ENCODE measurements at regions of chr17 and their contacts with region 1.

Region 1: DNA sequence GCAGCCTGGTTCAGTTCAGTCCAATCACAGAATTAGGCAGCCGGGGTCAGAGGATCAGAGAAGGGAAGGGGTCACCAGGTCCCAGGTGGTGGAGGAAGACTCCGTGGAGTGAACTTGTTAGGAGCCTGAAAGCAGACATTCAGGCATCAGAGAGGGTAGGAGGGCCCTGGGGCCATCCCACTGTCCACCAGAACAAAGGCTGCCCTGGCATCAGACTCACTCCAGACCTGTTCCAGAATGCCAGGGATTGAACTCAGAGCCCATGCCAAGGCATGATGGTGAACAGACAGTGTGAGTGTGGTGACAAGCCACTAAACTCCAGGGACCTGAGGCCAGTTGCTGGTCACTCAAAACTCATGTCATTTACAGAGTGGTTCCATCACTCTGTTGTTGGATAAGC is 37.6 kb downstream of the B4GALNT2 start:
- DNase-seq: no peak
- ATAC-seq: no peak

Region 2: DNA sequence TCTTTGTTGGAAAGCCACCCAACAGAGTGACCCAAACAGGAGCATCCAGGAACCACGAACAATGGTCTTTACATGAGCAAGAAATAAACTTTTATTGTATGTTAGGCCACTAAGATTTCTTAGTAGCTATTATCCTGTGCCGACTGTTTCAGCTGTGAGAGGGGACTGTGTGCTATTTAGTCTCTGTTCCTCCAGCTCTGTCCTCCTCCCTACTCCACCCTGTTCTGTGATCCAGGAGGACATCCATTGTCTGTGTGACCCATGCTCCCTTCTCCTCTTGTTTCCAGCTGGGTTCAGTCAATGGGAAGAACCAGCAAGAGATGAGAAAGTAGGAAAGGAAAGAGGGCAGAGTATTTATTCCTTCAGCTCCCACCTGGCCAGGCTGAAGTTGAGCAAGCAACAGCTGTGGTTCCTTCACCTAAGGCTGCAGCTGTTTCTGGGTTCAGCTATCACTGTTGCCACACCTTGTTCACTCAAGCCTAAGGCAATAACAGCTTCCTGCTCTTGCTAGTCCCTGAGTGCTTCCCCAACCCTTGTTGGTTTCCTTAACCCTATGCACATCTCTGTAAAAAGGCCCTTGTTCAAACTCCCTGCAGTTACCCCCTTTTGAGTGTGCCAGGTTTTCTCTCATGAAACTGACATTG is 52.5 kb before region 1 on chr17:
- intact Hi-C with region 1: loop called in 1 of 2 experiments (anchors 10 kb)
- DNase-seq: peak; percentile 39 to 54
- ATAC-seq: peak; percentile 93